WTC11 (cell line): ENCODE measurements at regions of chr10 and their contacts with region 1.

Region 1: GRCh38 chr10:110036640-110037039 is 28.9 kb downstream of the ADD3 start:
- DNase-seq: no peak
- ATAC-seq: no peak
- H3K4me3 Mint-ChIP-seq: no peak overlapping the region
- H3K27ac Mint-ChIP-seq: no peak overlapping the region
- H3K4me1 Mint-ChIP-seq: peaks cover 57% of the 10 kb centered on the region
- H3K27me3 Mint-ChIP-seq: no peaks in the 10 kb centered on the region
- CTCF ChIP-seq: no peak

Region 2: DNA sequence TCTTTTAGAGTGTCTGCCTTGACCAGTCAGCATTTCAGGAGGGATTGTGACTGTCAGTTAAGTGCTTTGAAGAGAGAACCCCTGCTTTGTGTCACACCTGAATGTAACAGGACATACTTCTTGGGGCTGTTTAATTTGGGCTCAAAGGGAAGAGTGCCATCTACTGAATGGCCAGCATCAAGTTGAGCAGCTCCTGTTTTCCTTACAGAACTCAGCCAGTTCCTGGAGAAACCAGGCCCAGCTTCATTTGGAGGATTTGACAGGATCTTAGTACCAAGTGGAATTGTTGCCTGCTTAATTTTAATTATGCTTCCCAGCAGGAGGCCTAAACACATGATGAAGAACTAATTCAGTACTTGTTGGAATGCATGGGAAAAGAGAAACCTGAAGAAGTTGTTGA is 20.6 kb before region 1 on chr10:
- CTCF ChIA-PET with region 1: interaction called, 19 read pairs
- POLR2A ChIA-PET with region 1: no interaction called
- DNase-seq: no peak
- ATAC-seq: peak; percentile 85
- H3K4me3 Mint-ChIP-seq: no peak overlapping the region
- H3K27ac Mint-ChIP-seq: peak overlapping the region; percentile 75
- H3K4me1 Mint-ChIP-seq: peaks cover 48% of the 10 kb centered on the region
- H3K27me3 Mint-ChIP-seq: no peaks in the 10 kb centered on the region
- CTCF ChIP-seq: no peak

Region 3: GRCh38 chr10:110058212-110058611 is 21.6 kb after region 1 on chr10:
- CTCF ChIA-PET with region 1: interaction called, 10 read pairs
- POLR2A ChIA-PET with region 1: no interaction called
- DNase-seq: no peak
- ATAC-seq: no peak
- H3K4me3 Mint-ChIP-seq: no peak overlapping the region
- H3K27ac Mint-ChIP-seq: peak overlapping the region; percentile 80
- H3K4me1 Mint-ChIP-seq: peaks cover 20% of the 10 kb centered on the region
- H3K27me3 Mint-ChIP-seq: no peaks in the 10 kb centered on the region
- CTCF ChIP-seq: no peak